ENCODE measurements at regions of chr15 and their contacts with region 1.

Region 1: GRCh38 chr15:85330901-85331588 is 49.4 kb upstream of the AKAP13 start:
- DNase-seq: peak; percentile 87 to 96 (median 90)
- ATAC-seq: peak; percentile 94 to 96 (median 95)
- H3K4me3 ChIP-seq: peak overlapping the region in 5 of 12 donors; percentile 8 to 53 (median 16)
- H3K27ac ChIP-seq: peak overlapping the region; percentile 84 to 97 (median 92)
- H3K4me1 ChIP-seq: peaks cover 4 to 66% (median 38%) of the 10 kb centered on the region in 12 donors
- H3K27me3 ChIP-seq: no peaks in the 10 kb centered on the region
- CTCF ChIP-seq: peak; percentile 57 to 93 (median 83)
- POLR2A ChIP-seq: peak in 1 of 2 donors; percentile 52

Region 2: DNA sequence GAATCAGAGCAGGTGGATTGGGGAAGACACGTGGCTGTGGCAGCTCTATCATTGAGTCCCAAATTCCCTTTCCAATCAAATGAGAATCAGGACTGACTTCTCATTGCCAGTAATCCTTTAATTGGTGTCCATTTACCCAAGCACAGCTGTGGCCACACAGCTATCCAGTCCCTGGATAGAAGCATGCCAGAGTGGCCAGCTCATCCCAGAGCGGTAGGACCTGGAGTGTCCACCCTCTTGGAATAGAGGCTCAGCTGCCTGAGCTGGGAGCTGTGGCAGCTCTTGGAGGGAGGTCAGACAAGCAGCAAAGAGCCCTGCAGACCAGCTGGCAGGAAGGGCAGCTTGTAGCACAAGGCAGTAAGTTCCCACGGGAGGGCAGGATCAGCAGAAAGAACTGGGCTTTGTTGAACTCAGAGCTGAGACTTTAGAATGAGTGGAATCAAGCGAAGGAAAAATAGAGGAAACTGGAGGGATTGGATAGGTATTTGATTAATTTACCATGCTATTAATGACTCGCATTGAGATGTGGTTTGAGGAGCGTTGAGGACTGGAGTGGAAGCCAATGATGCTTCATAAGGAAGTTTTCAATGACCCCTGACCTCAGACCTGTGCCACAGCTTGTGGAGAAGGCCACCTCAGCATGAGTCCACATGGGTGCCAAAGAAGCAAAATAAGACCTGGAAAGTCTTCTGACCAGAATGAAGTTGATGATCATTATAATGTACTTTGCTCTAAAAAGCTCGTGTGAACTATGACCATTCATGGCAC is 520.8 kb before region 1 on chr15:
- intact Hi-C with region 1: no loop called
- DNase-seq: peak in 1 of 5 donors; percentile 19
- ATAC-seq: peak in 3 of 4 donors; percentile 47 to 62 (median 56)
- H3K4me3 ChIP-seq: no peak overlapping the region
- H3K27ac ChIP-seq: no peak overlapping the region
- H3K4me1 ChIP-seq: peaks cover 0 to 11% (median 5%) of the 10 kb centered on the region in 12 donors
- H3K27me3 ChIP-seq: no peaks in the 10 kb centered on the region
- CTCF ChIP-seq: no peak
- POLR2A ChIP-seq: no peak

Region 3: GRCh38 chr15:85289677-85290365 is 41.2 kb before region 1 on chr15:
- intact Hi-C with region 1: no loop called
- DNase-seq: peak in 4 of 5 donors; percentile 44 to 73 (median 60)
- ATAC-seq: peak; percentile 60 to 87 (median 85)
- H3K4me3 ChIP-seq: no peak overlapping the region
- H3K27ac ChIP-seq: no peak overlapping the region
- H3K4me1 ChIP-seq: peaks cover 0 to 6% (median 0%) of the 10 kb centered on the region in 12 donors
- H3K27me3 ChIP-seq: no peaks in the 10 kb centered on the region
- CTCF ChIP-seq: peak; percentile 29 to 67 (median 52)
- POLR2A ChIP-seq: no peak

Region 4: DNA sequence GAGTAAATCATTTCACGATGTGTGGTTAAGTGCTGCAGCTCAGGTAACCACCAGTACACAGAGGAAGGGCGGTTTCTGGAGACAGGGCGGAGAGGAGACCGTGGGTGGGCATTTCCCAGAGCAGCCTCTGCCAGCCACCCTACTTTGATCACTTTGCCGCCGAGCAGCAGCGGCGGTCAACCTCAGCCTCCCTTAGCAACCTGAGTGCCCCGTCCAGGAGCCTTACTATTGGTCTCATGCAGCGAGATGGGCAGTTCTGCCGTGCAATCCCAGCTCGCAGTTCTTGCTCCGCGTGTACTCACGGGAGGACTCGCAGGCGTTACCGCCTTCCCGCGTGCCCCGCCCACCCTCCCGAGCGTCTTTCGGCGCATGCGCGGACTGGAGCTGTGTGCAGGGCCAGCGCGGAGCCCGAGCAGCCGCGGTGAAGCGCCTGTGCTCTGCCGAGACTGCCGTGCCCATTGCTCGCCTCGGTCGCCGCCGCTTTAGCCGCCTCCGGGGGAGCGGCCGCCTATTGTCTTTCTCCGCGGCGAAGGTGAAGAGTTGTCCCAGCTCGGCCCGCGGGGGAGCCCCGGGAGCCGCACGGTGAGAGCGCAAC is 49.3 kb after region 1 on chr15 and contains the start of gene AKAP13:
- intact Hi-C with region 1: loop called in 7 of 10 experiments (anchors 2 to 10 kb)
- DNase-seq: peak; percentile 98 to 99 (median 99)
- ATAC-seq: peak; percentile 89 to 96 (median 93)
- H3K4me3 ChIP-seq: peak within 1 kb of the TSS; percentile 73 to 98 (median 90)
- H3K27ac ChIP-seq: peak within 1 kb of the TSS; percentile 77 to 98 (median 94)
- H3K4me1 ChIP-seq: peaks cover 0 to 38% (median 24%) of the 10 kb centered on the region in 12 donors
- H3K27me3 ChIP-seq: no peaks in the 10 kb centered on the region
- CTCF ChIP-seq: no peak
- POLR2A ChIP-seq: peak; percentile 61 to 96
- total RNA-seq, gene AKAP13: 259 to 598 (median 357) TPM

Region 5: DNA sequence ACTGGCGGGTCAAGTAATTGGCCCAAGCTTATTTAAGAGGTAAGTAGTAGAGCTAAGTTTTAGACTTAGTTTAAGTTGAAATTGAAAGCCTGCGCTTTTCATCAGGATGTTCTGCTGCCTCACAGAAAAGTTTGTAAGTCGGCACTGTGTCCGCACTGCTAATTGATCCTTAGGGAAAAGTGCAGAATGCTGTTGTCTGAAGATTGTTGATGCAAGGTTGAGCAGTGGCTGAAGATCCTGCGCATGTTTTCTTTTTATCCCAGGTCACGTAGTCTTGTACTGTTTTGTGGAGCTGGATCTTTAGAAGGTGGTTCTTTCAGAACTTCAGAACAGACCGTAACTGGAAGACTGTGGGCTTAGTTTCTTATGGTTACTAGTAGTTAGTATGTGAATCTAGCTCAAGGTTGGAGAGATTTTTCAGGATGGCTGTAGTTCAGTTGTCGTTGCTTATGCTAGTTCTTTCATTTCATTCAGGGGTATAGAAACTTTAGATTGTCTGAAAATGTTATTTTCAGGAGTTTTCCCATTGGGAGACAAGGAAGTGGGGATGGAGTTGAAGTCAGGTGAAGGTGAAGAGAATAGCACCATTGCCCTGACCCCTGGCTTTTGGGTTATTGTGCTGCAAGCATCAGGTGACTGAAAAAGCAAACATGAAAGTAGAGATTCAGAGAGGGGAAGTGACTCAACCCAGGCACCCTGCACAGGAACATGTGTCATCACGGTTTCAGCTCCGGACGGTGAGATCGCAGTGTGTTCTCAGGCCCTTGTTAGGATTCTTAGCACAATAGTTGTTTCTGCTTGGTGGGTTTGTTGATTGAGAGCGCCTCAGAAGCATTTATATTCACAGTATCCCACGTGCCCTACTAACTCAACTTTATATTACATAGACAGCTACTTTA is 82.2 kb after region 1 on chr15:
- intact Hi-C with region 1: loop called in 4 of 10 experiments (anchors 2 to 10 kb)
- DNase-seq: peak in 4 of 5 donors; percentile 44 to 74 (median 48)
- ATAC-seq: peak; percentile 74 to 91 (median 88)
- H3K4me3 ChIP-seq: peak overlapping the region in 9 of 12 donors; percentile 0 to 31 (median 17)
- H3K27ac ChIP-seq: peak overlapping the region in 11 of 12 donors; percentile 7 to 80 (median 60)
- H3K4me1 ChIP-seq: peaks cover 7 to 77% (median 50%) of the 10 kb centered on the region in 12 donors
- H3K27me3 ChIP-seq: no peaks in the 10 kb centered on the region
- CTCF ChIP-seq: peak in 2 of 12 donors; percentile 14 to 24
- POLR2A ChIP-seq: no peak

Region 6: GRCh38 chr15:85485956-85486567 is 155.0 kb after region 1 on chr15:
- intact Hi-C with region 1: loop called in 2 of 10 experiments (anchors 10 kb)
- DNase-seq: peak in 2 of 5 donors; percentile 49 to 62
- ATAC-seq: peak; percentile 47 to 79 (median 73)
- H3K4me3 ChIP-seq: no peak overlapping the region
- H3K27ac ChIP-seq: peak overlapping the region in 1 of 12 donors; percentile 41
- H3K4me1 ChIP-seq: peaks cover 0 to 80% (median 42%) of the 10 kb centered on the region in 12 donors
- H3K27me3 ChIP-seq: no peaks in the 10 kb centered on the region
- CTCF ChIP-seq: peak; percentile 58 to 92 (median 86)
- POLR2A ChIP-seq: no peak

Region 7: DNA sequence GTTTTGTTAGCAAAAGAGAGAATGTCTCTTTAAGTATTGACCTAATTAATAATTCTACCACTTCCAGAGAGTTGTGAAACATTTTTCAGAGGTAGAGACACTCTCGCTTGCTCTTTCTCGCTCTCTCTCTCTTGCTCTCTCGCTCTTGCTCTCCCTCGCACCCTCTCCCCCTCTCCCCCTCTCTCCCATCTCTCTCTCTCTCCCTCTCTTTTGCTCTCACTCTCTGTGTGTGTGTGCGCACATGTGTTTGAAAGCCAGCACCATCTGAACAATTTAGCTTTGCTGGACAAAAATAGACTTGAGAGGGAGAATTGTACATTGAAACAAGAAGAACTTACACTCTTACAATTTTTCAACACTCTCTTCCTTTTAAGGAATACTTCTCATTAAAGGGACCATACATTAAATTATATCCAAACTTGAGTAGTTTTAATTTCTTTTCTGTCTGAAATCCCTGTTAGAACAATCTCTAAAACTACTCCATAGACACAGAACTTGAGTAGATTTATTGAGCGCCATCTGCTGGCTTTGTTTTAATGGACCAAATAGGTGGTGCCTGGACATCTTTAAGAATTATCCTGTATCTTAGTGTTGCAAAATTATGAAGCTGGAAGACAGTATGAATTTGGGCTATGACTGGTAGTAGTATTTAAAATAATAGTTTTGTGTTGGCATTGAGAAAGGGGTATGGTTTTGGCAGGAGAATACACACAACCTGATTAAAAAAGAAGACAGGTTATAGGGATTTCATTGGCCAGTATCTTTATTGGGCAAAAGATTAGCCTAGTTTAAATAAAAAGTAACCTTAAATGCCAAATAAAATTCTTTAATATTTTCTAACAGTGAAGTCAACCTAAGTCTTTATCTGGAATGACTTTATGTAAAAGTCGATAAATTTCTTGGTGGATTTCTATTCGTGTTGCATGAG is 174.0 kb after region 1 on chr15:
- intact Hi-C with region 1: loop called in 7 of 10 experiments (anchors 5 to 10 kb)
- DNase-seq: peak in 2 of 5 donors; percentile 39 to 62
- ATAC-seq: peak in 3 of 4 donors; percentile 50 to 66 (median 58)
- H3K4me3 ChIP-seq: no peak overlapping the region
- H3K27ac ChIP-seq: peak overlapping the region in 10 of 12 donors; percentile 29 to 83 (median 64)
- H3K4me1 ChIP-seq: peaks cover 2 to 91% (median 48%) of the 10 kb centered on the region in 12 donors
- H3K27me3 ChIP-seq: no peaks in the 10 kb centered on the region
- CTCF ChIP-seq: peak; percentile 29 to 79 (median 62)
- POLR2A ChIP-seq: no peak

Region 8: DNA sequence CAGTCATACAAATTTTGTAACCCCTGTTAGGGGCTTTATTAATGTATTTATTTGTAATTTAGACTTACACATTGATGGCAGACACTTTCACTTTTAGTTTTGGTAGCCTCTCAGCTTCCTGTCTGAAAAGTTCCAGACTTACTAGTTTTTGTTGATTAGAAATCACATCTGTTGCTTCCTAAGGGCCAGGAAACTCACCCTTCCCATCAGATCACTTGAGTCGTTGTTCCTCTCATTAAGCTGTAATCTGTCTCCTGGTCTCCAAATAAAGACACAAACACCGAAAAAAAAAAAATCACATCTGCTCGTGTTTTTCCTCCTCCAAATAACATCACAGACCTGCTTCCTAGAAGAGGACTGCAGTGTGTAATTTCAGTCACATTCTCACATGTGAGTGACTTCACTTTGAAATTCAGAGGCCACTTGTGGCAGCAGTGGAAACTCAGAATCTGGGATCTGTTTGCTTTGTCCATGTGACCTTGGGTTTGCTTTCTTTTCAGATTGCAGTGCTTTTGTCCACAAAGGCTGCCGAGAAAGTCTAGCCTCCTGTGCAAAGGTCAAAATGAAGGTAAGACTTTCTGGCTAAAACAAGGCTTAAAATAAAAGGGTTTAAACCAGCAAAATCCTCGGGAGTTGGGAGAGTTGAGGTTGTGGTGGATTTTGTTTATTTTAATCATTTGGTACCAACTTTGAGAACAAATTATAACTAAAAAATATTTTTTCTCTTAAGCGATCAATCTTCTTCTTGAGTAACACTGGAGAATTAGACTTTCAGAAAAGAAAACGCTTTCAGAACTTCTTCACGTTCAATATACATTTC is 376.7 kb after region 1 on chr15:
- intact Hi-C with region 1: loop called in 1 of 10 experiments (anchors 10 kb)
- DNase-seq: peak in 1 of 5 donors; percentile 35
- ATAC-seq: peak; percentile 25 to 48 (median 28)
- H3K4me3 ChIP-seq: peak overlapping the region in 9 of 12 donors; percentile 10 to 46 (median 21)
- H3K27ac ChIP-seq: peak overlapping the region; percentile 70 to 97 (median 86)
- H3K4me1 ChIP-seq: peaks cover 3 to 87% (median 63%) of the 10 kb centered on the region in 12 donors
- H3K27me3 ChIP-seq: no peaks in the 10 kb centered on the region
- CTCF ChIP-seq: no peak
- POLR2A ChIP-seq: no peak